PC-3 (cell line): ENCODE measurements at regions of chr6 and their contacts with region 1.

Region 1: GRCh38 chr6:41846666-41847237 is 48.4 kb downstream of the USP49 start:
- DNase-seq: peak; percentile 98
- ATAC-seq: peak; percentile 99
- H3K4me3 ChIP-seq: peak overlapping the region; percentile 13; the same call in 1 of the 2 replicates
- H3K27ac ChIP-seq: peak overlapping the region; percentile 39
- H3K4me1 ChIP-seq: peaks cover 9% of the 10 kb centered on the region
- H3K27me3 ChIP-seq: no peaks in the 10 kb centered on the region
- CTCF ChIP-seq: peak; percentile 89

Region 2: GRCh38 chr6:41801380-41801779 is 45.4 kb before region 1 on chr6:
- CTCF ChIA-PET with region 1: interaction called, 3 read pairs
- POLR2A ChIA-PET with region 1: no interaction called
- intact Hi-C with region 1: loop called (anchors 1 kb)
- DNase-seq: peak; percentile 55
- ATAC-seq: peak; percentile 73
- H3K4me3 ChIP-seq: no peak overlapping the region
- H3K27ac ChIP-seq: no peak overlapping the region
- H3K4me1 ChIP-seq: no peaks in the 10 kb centered on the region
- H3K27me3 ChIP-seq: no peaks in the 10 kb centered on the region
- CTCF ChIP-seq: peak; percentile 80

Region 3: DNA sequence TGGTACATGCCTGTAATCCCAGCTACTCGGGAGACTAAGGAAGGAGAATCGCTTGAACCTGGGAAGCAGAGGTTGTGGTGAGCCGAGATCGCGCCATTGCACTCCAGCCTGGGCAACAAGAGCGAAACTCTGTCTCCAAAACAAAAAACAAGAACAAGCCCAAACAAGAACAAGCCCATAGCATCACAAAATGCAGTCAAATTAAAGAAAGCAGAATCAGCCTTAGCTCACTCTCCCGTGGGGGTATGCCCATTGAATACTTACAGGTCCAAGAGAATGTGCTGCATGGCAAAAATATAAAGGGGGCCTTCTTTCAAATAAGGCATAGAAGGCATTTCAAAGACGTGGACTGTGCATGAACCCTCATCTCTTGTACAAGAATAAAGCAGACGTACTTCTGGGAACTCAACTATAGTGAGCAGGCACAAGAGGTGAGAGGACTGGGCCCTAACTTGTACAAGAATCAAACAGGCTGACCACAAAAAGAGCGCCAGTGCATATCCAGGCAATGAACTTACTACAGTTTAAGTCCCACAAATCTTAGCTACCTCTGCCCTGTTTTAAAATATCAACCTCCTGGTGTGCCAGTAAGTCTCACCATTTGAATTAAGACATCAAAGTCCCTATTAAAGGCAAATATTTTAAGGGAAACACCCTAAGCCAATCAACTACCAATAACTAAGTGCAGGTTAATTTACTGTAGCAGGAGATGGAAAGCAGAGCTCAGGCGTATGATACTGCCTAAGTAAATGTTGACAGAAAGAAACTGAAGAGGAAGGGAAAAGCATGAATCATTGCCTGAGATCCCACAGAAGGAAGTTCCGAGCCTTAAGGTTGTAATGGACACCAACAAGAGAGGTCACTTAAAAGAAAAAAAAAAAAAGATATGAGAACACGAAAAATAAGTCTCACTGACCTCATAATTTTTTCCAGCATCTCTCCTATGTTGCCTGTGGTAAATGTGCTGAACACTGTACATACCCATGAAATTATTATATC is 21.9 kb before region 1 on chr6:
- CTCF ChIA-PET with region 1: no interaction called
- POLR2A ChIA-PET with region 1: no interaction called
- intact Hi-C with region 1: loop called (anchors 1 kb)
- DNase-seq: peak; percentile 89
- ATAC-seq: peak; percentile 100
- H3K4me3 ChIP-seq: no peak overlapping the region
- H3K27ac ChIP-seq: peak overlapping the region; percentile 52
- H3K4me1 ChIP-seq: peaks cover 12% of the 10 kb centered on the region
- H3K27me3 ChIP-seq: no peaks in the 10 kb centered on the region
- CTCF ChIP-seq: no peak

Region 4: DNA sequence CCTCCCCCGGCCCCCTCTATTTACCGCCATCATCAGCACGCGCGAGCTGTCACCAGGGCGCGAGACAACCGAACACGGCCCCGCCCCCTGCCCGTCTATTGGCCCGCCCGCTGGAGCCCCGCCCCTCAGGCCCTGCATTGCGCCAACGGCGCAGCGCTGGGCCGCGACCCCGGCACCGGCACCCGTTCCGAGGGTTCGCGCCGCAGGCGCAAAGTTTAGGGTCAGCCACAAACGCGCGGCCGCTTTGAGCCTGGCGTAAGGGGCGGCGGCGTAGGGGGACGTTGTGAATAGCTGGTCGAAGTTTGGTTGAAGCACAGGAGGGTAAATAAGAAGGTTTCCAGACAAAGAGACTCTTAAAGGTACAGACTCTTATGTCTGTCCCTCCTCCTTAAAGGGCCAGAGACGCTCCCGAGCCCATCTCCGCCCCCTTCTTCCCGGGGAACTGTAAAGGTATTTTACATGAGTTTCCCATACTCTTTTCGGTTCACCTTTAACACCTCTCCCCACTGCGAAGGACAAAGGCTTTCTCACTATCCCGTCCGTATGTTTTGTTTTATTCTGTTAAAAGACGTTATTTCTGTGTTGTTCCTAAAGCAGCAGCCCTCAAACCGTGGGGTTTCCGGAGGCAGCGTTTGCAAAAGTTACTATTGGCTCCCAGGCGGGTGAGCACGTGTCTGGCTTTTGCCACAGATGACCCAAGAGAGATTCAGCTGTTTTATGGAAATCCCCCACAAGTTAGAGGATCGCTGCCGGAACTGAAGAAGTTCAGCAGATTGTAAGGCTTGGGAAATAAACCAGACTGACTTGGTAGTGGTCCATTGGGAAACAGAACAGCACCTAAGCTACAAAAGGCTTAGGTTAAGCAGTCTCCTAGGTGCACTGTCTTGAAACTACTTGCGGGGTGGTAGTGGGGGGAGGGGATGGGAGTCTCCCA is 48.8 kb after region 1 on chr6 and contains the start of gene USP49:
- CTCF ChIA-PET with region 1: no interaction called
- POLR2A ChIA-PET with region 1: no interaction called
- intact Hi-C with region 1: loop called (anchors 5 kb)
- DNase-seq: peak; percentile 82
- ATAC-seq: peak; percentile 92
- H3K4me3 ChIP-seq: peak within 1 kb of the TSS; percentile 85
- H3K27ac ChIP-seq: peak within 1 kb of the TSS; percentile 67
- H3K4me1 ChIP-seq: peaks cover 16% of the 10 kb centered on the region
- H3K27me3 ChIP-seq: no peaks in the 10 kb centered on the region
- CTCF ChIP-seq: no peak
- total RNA-seq, gene USP49: 2.3 and 5.7 TPM in 2 replicates

Region 5: DNA sequence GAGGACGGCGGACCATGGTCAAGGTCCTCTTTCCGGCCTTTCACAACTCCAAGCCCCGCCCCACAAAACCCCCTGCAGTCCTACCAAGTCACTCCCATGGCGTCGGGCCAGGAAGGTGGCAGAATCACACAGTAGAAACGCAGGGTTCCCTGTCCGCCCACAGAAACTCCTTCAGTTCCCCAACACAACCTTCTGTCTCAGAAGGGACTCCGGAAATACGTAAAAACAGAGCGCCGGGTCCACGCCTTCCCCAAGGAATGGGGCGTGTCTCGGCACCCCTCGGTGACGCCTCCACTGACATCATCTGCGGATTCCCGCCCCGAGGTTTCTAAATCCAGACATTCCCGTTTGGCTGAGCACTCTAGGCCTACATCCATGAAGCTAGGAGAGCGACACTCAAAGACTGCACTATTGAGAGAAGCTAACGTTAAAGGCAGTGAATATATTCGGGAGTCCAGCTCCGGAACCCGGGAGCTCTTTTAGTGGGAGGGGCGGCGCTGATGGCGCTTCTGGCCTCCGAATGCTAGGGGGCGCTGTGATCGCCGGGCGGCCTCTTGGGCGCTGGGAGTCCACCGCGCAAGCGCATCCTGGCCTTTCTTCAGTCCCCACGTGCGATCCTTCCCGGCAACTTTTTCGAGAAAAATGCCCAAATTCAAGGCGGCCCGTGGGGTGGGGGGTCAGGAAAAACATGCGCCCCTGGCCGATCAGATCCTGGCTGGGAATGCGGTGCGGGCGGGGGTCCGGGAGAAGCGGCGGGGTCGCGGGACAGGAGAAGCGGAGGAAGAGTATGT is 74.4 kb after region 1 on chr6 and contains the starts of genes BYSL and MED20:
- CTCF ChIA-PET with region 1: no interaction called
- POLR2A ChIA-PET with region 1: no interaction called
- intact Hi-C with region 1: loop called (anchors 1 kb)
- DNase-seq: peak; percentile 94
- ATAC-seq: peak; percentile 80
- H3K4me3 ChIP-seq: peak within 1 kb of the TSS; percentile 99
- H3K27ac ChIP-seq: peak within 1 kb of the TSS; percentile 89
- H3K4me1 ChIP-seq: peaks cover 37% of the 10 kb centered on the region
- H3K27me3 ChIP-seq: no peaks in the 10 kb centered on the region
- CTCF ChIP-seq: peak; percentile 96
- total RNA-seq, gene BYSL: 46.5 and 84.1 TPM in 2 replicates
- total RNA-seq, gene MED20: 27.5 and 28.5 TPM in 2 replicates

Region 6: GRCh38 chr6:41936073-41936837 is 89.5 kb after region 1 on chr6:
- CTCF ChIA-PET with region 1: interaction called, 3 read pairs
- POLR2A ChIA-PET with region 1: no interaction called
- intact Hi-C with region 1: loop called (anchors 1 kb)
- DNase-seq: peak; percentile 91
- ATAC-seq: peak; percentile 74
- H3K4me3 ChIP-seq: no peak overlapping the region
- H3K27ac ChIP-seq: no peak overlapping the region
- H3K4me1 ChIP-seq: peaks cover 26% of the 10 kb centered on the region
- H3K27me3 ChIP-seq: no peaks in the 10 kb centered on the region
- CTCF ChIP-seq: peak; percentile 87

Region 7: GRCh38 chr6:42482174-42482573 is 635.4 kb after region 1 on chr6:
- CTCF ChIA-PET with region 1: no interaction called
- POLR2A ChIA-PET with region 1: no interaction called
- intact Hi-C with region 1: no loop called
- DNase-seq: no peak
- ATAC-seq: no peak
- H3K4me3 ChIP-seq: no peak overlapping the region
- H3K27ac ChIP-seq: no peak overlapping the region
- H3K4me1 ChIP-seq: no peaks in the 10 kb centered on the region
- H3K27me3 ChIP-seq: no peaks in the 10 kb centered on the region
- CTCF ChIP-seq: no peak